ENCODE measurements at regions of chr2 and their contacts with region 1.

Region 1: DNA sequence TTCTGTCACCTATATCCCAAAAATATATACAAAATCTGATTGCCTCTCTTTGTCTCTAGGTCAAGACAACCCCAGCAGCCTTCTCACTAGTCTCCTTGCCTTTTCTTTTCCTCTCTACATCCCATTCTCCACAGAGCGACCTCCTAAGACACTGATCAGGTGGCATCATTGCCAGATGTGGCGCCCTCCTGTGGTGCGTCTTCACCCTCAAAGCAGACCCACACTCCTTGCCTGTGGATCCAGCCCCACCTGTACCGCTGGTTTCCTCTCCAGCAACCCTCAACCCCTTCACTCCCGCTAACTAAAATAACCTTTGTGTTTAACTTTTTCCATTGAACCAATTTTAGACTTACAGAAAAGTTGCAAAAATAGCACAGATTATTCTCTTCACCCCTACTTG is 273.3 kb downstream of the GLI2 start:
- DNase-seq: no peak
- H3K4me3 ChIP-seq: no peak overlapping the region
- H3K27ac ChIP-seq: no peak overlapping the region
- H3K4me1 ChIP-seq: no peaks in the 10 kb centered on the region
- H3K27me3 ChIP-seq: peaks cover 5% of the 10 kb centered on the region
- CTCF ChIP-seq: peak; percentile 41 to 46

Region 2: DNA sequence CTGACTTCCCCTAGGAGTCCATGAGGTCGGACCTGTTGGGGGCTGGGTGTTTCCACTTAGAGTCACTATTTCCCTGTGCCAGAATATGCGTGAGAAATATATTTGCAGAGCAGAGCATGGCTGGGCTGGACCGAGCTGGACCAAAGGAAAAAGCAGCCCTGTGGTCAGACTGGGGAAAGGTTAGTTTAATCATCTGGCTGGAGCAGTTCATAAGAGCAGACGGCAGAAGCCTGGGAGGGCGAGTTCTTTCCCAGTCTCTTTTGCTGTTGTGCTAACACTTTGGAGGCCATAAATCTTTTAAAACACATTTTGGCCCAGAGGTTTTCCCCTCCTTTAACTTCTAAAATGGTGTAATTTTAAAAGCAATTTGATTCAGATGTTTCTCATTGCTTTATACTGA is 206.8 kb before region 1 on chr2:
- CTCF ChIA-PET with region 1: no interaction called
- dilution Hi-C with region 1: loop called (anchors 10 kb)
- in situ Hi-C with region 1: no loop called
- intact Hi-C with region 1: no loop called
- DNase-seq: no peak
- H3K4me3 ChIP-seq: no peak overlapping the region
- H3K27ac ChIP-seq: no peak overlapping the region
- H3K4me1 ChIP-seq: no peaks in the 10 kb centered on the region
- H3K27me3 ChIP-seq: peaks cover 5% of the 10 kb centered on the region
- CTCF ChIP-seq: no peak

Measured in mammary epithelial cell (primary cell).